Heart right ventricle (tissue), 16 donors: ENCODE measurements at regions of chr22 and their contacts with region 1.

Region 1: GRCh38 chr22:24768537-24769374 is 5.8 kb downstream of the PIWIL3 start:
- DNase-seq: peak in 1 of 2 donors; percentile 63
- ATAC-seq: peak; percentile 52 to 86 (median 82)
- H3K4me3 ChIP-seq: no peak overlapping the region
- H3K27ac ChIP-seq: no peak overlapping the region
- H3K4me1 ChIP-seq: no peaks in the 10 kb centered on the region
- H3K27me3 ChIP-seq: peaks cover 0 to 46% (median 20%) of the 10 kb centered on the region in 7 donors
- CTCF ChIP-seq: peak; percentile 20 to 76 (median 71)

Region 2: GRCh38 chr22:24834845-24835570 is 66.3 kb after region 1 on chr22:
- intact Hi-C with region 1: loop called in 1 of 10 experiments (anchors 10 kb)
- DNase-seq: no peak
- ATAC-seq: peak in 3 of 8 donors; percentile 66 to 71 (median 67)
- H3K4me3 ChIP-seq: no peak overlapping the region
- H3K27ac ChIP-seq: no peak overlapping the region
- H3K4me1 ChIP-seq: peaks cover 0 to 4% (median 0%) of the 10 kb centered on the region in 9 donors
- H3K27me3 ChIP-seq: no peaks in the 10 kb centered on the region
- CTCF ChIP-seq: peak in 7 of 9 donors; percentile 16 to 40 (median 27)

Region 3: DNA sequence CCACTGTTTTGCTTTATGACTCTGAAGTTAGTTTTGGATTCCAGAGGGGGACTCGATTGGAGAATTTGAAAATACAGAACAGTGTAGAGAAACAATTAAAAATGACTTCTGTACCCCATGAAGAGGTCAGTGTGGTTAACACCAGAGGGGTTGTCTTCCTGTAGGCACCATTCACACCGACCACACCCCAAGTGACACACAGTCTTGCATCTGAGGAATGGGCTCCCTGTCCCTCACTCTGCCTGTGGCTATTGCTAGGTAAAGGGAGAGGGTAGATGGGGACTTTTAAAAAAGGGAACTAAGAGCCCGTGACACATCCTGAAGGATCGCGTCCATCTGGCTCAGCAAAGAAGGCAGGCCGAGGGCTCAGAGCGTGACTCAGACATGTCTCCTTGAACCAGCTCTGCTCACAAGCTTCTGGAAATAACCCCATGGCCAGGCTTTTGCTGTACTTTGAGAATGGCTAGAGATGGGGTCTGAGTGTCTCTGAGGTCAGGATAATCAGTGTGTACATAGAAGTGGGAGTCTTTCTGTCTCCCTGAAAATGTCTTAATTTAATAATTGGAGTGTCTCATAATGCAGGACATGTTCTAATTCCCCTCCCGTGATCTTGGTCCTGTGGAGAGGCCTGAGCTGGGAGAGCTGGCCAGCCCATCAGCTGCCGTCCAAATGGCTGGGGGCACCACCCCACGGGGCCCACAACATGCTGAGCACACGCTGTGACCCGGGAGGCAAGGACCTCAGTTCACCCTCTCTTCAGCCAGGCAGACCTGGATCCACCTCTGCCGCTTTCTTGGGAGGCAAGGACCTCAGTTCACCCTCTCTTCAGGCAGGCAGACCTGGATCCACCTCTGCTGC is 76.5 kb after region 1 on chr22:
- intact Hi-C with region 1: loop called (anchors 1 to 5 kb)
- DNase-seq: no peak
- ATAC-seq: peak in 6 of 8 donors; percentile 17 to 64 (median 31)
- H3K4me3 ChIP-seq: no peak overlapping the region
- H3K27ac ChIP-seq: peak overlapping the region in 1 of 10 donors; percentile 14
- H3K4me1 ChIP-seq: peaks cover 0 to 8% (median 0%) of the 10 kb centered on the region in 9 donors
- H3K27me3 ChIP-seq: no peaks in the 10 kb centered on the region
- CTCF ChIP-seq: no peak

Region 4: DNA sequence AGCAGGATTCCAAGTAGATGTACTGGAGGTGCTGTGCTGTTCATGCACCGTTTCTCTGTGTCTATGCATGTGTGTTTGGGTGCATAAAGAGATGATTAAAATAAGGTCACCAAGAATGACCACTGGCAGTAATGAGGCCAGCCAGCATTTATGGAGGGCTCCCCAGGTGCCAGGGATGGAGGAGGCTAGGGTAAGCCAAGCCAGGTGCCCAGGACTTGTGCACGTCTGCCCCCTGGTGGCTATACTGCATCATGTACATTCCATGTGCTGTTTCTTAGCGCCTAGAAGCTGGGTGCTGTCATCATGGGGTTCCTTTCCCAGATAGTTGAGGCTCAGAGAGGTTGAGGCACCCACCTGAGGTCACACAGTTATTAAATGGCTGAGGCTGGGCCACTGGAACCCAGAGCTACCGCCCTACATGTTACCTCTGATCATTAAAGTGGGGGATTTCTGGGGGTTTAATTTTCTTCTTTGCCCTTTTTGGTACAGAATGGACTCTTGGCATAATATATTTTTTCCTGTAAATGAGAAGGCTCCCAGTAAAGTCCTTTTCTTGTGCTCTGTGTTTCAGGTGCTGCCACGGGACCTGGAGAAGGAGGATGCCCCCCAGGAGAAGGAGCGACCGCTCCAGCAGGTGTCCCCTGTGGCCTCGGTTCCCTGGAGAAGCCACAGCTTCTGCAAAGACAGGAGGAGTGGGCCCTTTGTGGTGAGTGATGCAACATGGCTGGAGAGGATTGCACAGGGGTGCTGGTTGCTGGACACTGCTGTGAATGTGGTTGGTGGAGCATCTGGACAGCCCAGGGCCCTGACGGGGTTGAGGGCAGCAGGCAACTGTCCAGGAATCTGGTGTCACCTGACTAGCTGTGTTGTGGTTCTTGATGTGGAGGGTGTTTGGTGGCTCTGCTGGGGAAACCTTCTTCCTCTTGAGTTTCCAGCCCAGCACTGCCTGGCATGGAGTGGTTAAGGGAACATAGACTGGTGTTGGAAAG is 280.2 kb after region 1 on chr22:
- intact Hi-C with region 1: loop called in 5 of 10 experiments (anchors 5 to 10 kb)
- DNase-seq: peak; percentile 63 to 65
- ATAC-seq: peak; percentile 70 to 83 (median 76)
- H3K4me3 ChIP-seq: no peak overlapping the region
- H3K27ac ChIP-seq: no peak overlapping the region
- H3K4me1 ChIP-seq: peaks cover 0 to 39% (median 6%) of the 10 kb centered on the region in 9 donors
- H3K27me3 ChIP-seq: no peaks in the 10 kb centered on the region
- CTCF ChIP-seq: peak; percentile 79 to 96 (median 93)

Region 5: GRCh38 chr22:25057013-25057881 is 288.5 kb after region 1 on chr22:
- intact Hi-C with region 1: loop called in 4 of 10 experiments (anchors 5 to 10 kb)
- DNase-seq: peak; percentile 46 to 75
- ATAC-seq: peak; percentile 70 to 81 (median 74)
- H3K4me3 ChIP-seq: no peak overlapping the region
- H3K27ac ChIP-seq: no peak overlapping the region
- H3K4me1 ChIP-seq: peaks cover 0 to 27% (median 8%) of the 10 kb centered on the region in 9 donors
- H3K27me3 ChIP-seq: no peaks in the 10 kb centered on the region
- CTCF ChIP-seq: peak; percentile 76 to 92 (median 86)